ENCODE measurements at regions of chr4 and their contacts with region 1.

Region 1: GRCh38 chr4:183074296-183074990 is 24.6 kb upstream of the WWC2 start:
- DNase-seq: no peak
- ATAC-seq: no peak
- H3K4me3 Mint-ChIP-seq: no peak overlapping the region
- H3K27ac Mint-ChIP-seq: no peak overlapping the region
- H3K4me1 Mint-ChIP-seq: no peaks in the 10 kb centered on the region
- H3K27me3 Mint-ChIP-seq: peaks cover 7% of the 10 kb centered on the region
- CTCF ChIP-seq: no peak

Region 2: DNA sequence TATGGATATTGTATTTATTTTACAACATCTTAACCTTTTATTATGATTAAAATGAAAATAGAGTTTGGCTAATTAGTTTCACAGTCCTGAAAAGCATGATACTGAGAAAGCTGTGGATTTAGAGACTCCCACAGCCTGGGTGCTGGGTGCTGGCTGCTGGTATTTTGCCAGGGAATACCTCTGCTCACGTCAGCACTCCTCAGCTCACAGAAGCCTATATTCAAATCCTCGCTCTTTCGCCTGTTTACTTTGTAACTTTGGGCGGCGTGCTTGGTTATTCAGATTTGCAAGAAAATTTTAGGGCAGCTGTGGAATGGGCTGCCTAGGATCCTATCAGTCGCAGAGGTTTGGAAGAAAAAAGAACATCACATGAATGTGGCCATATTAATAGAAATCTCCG is 419.1 kb before region 1 on chr4:
- CTCF ChIA-PET with region 1: no interaction called
- POLR2A ChIA-PET with region 1: no interaction called
- intact Hi-C with region 1: no loop called
- DNase-seq: no peak
- ATAC-seq: no peak
- H3K4me3 Mint-ChIP-seq: no peak overlapping the region
- H3K27ac Mint-ChIP-seq: no peak overlapping the region
- H3K4me1 Mint-ChIP-seq: no peaks in the 10 kb centered on the region
- H3K27me3 Mint-ChIP-seq: peaks cover 2% of the 10 kb centered on the region
- CTCF ChIP-seq: no peak

Region 3: GRCh38 chr4:183098019-183098722 is 23.7 kb after region 1 on chr4:
- CTCF ChIA-PET with region 1: no interaction called
- POLR2A ChIA-PET with region 1: no interaction called
- intact Hi-C with region 1: no loop called
- DNase-seq: peak; percentile 24
- ATAC-seq: peak; percentile 37
- H3K4me3 Mint-ChIP-seq: peak overlapping the region; percentile 72
- H3K27ac Mint-ChIP-seq: no peak overlapping the region
- H3K4me1 Mint-ChIP-seq: peaks cover 7% of the 10 kb centered on the region
- H3K27me3 Mint-ChIP-seq: peaks cover 35% of the 10 kb centered on the region
- CTCF ChIP-seq: no peak

Region 4: DNA sequence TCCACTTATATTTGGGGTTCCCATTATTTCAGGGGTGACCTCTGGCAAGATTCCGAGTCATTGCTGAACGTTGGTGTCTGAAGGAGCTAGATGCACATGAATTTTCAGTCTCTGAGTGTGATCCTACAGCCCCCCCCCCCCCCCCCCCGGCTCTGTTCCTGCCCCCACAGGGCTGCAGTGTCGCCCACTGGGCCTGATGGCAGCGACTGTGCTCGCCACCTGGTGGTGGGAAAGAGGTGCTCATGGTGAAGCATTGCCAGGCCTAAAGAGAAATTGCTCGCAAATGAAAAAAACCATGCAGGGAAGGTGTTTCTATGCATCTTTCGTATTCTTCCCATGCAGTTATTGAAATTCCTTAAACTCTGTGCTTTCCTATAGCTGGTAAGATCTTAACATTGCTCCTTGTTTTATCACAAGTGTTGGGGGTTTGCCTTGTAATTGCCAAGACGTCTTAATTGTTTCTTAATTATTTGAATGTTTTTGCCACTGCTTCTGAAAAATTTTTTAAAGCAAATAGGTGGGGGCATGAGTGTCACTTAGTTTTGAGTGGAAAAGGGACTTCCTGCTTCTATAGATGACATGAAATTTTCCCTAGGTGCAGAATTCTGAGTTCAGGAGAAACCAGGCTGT is 182.4 kb after region 1 on chr4:
- CTCF ChIA-PET with region 1: interaction called, 23 read pairs
- POLR2A ChIA-PET with region 1: no interaction called
- intact Hi-C with region 1: loop called (anchors 1 kb)
- DNase-seq: no peak
- ATAC-seq: peak; percentile 50
- H3K4me3 Mint-ChIP-seq: no peak overlapping the region
- H3K27ac Mint-ChIP-seq: no peak overlapping the region
- H3K4me1 Mint-ChIP-seq: no peaks in the 10 kb centered on the region
- H3K27me3 Mint-ChIP-seq: peaks cover 6% of the 10 kb centered on the region
- CTCF ChIP-seq: no peak

Region 5: DNA sequence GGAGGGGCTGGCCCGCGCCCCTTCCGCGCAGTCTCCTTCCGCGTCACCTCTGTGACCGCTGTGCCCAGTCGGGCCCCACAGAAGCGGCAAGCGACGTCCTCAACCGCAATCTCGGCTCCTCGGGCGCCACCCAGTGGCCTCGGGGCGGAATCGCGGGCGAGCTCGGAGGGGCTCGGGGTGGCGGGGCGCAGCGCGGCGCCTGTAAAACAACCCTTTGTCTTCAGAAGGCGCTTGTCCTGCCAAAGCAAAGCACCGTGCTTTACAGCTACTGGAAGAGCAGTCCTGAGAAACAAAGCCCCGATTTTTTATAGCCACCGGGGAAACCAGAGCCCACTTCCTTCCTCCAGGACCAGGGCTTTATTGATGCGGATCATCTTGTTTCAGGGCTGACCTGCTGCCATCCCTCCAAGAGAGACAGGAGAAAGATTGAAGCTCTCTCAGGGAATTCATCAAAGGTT is 332.7 kb after region 1 on chr4:
- CTCF ChIA-PET with region 1: interaction called, 5 read pairs
- POLR2A ChIA-PET with region 1: no interaction called
- intact Hi-C with region 1: loop called (anchors 1 kb)
- DNase-seq: peak; percentile 90
- ATAC-seq: peak; percentile 99
- H3K4me3 Mint-ChIP-seq: peak overlapping the region; percentile 79
- H3K27ac Mint-ChIP-seq: peak overlapping the region; percentile 35
- H3K4me1 Mint-ChIP-seq: peaks cover 15% of the 10 kb centered on the region
- H3K27me3 Mint-ChIP-seq: no peaks in the 10 kb centered on the region
- CTCF ChIP-seq: no peak